Activated CD4-positive, alpha-beta memory T cell treated with anti-CD3 and anti-CD28 coated beads for 36 hours (primary cell): ENCODE measurements at regions of chr11 and their contacts with region 1.

Region 1: GRCh38 chr11:94897330-94897768 is 76.0 kb downstream of the CWC15 start:
- DNase-seq: peak; percentile 54
- H3K4me3 Mint-ChIP-seq: no peak overlapping the region
- H3K27ac Mint-ChIP-seq: no peak overlapping the region
- H3K4me1 Mint-ChIP-seq: no peaks in the 10 kb centered on the region
- H3K27me3 Mint-ChIP-seq: no peaks in the 10 kb centered on the region

Region 2: GRCh38 chr11:94519478-94520084 is 377.8 kb before region 1 on chr11:
- CTCF ChIA-PET with region 1: interaction called, 7 read pairs
- POLR2A ChIA-PET with region 1: no interaction called
- intact Hi-C with region 1: loop called (anchors 1 kb)
- DNase-seq: no peak
- H3K4me3 Mint-ChIP-seq: no peak overlapping the region
- H3K27ac Mint-ChIP-seq: no peak overlapping the region
- H3K4me1 Mint-ChIP-seq: no peaks in the 10 kb centered on the region
- H3K27me3 Mint-ChIP-seq: peaks cover 15% of the 10 kb centered on the region

Region 3: DNA sequence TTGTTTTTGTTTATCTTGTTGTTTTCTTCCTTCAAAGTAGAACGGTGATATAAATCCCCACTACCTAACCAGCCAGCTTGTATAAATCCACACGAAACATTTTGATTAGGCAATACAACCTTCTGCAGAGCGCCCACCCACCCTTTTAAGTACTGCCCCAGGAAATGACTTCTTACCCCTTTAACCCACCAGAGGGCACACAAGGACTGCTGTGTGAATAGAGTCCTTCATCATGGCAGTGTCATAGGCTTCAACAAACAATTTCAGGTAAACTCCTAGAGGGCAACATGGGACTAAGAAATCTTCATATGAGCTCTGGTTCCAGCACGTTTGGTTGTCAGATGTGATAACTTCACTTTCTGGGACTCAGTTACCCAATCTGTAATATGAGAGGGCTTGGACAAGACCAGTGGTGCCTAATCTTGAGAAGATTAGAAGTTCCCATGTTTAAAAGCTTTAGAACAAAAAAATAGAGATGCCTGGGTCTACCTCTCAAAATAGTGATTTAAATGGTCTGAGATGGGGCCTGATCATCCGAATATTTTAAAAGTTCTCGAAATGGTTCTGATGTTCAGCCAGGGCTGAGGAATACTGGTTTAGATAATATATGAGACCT is 274.1 kb before region 1 on chr11:
- CTCF ChIA-PET with region 1: interaction called, 17 read pairs
- POLR2A ChIA-PET with region 1: no interaction called
- intact Hi-C with region 1: loop called (anchors 1 kb)
- DNase-seq: peak; percentile 62
- H3K4me3 Mint-ChIP-seq: no peak overlapping the region
- H3K27ac Mint-ChIP-seq: no peak overlapping the region
- H3K4me1 Mint-ChIP-seq: no peaks in the 10 kb centered on the region
- H3K27me3 Mint-ChIP-seq: peaks cover 8% of the 10 kb centered on the region

Region 4: DNA sequence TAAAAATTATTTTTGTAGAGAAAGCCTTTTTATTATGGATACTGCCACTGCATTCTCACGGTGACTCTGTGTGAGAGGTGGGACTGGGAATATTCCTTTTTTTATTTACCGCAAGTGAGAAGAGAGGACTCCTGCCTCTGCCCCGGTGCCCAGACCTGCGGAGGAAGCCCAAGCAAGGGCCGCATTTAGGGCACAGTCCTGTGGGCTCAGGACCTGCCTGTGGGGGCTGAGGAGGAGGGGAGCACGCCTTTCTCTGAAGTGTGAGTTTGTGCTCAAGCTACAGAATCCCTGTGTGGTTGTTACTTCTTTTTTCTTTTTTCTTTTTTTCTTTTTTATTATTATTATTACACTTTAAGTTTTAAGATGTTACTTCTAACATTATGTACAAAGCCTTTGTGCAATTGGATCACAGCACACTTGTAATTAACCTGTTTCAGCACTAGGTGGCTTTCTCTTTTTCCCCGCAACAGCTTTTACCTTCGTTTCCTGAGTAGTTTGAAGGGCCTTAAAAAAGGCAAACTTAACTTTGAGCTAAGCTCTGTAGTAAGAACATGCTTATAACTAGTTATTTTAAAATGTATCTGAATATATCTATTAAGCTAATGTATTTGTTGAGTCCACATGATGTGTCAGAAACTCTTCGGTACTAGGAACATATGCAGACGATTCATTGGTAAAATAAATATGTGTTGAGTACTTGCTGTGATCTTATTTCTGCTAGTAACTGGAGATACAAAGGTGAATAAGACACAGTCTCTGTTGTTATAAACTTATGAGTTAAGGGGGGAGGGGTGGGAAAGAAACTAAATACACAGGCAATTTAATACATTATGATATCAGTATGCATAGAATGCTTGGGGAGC is 110.9 kb before region 1 on chr11:
- CTCF ChIA-PET with region 1: interaction called, 24 read pairs
- POLR2A ChIA-PET with region 1: no interaction called
- intact Hi-C with region 1: loop called (anchors 1 kb)
- DNase-seq: no peak
- H3K4me3 Mint-ChIP-seq: no peak overlapping the region
- H3K27ac Mint-ChIP-seq: no peak overlapping the region
- H3K4me1 Mint-ChIP-seq: no peaks in the 10 kb centered on the region
- H3K27me3 Mint-ChIP-seq: peaks cover 1% of the 10 kb centered on the region

Region 5: DNA sequence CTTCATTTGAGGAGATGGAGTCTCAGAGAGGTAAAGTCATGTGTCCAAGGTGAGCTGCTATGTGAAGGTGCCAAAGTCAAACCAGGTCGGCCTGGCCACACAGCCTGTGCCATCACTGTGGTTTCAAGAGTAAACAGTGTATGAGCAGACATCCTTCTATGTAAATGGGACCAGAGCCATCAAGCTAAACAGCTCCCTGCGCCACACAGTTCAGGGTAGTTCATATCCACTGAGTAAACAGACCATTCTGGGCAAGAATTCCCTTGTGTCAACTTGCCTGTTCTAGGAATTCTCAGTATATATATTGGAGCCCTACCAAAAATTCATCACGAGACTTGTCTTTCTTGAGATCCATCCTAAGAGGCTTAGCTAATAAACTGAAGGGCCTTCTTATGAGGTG is 51.7 kb before region 1 on chr11:
- CTCF ChIA-PET with region 1: no interaction called
- POLR2A ChIA-PET with region 1: no interaction called
- intact Hi-C with region 1: no loop called
- DNase-seq: no peak
- H3K4me3 Mint-ChIP-seq: no peak overlapping the region
- H3K27ac Mint-ChIP-seq: no peak overlapping the region
- H3K4me1 Mint-ChIP-seq: no peaks in the 10 kb centered on the region
- H3K27me3 Mint-ChIP-seq: peaks cover 3% of the 10 kb centered on the region

Region 6: DNA sequence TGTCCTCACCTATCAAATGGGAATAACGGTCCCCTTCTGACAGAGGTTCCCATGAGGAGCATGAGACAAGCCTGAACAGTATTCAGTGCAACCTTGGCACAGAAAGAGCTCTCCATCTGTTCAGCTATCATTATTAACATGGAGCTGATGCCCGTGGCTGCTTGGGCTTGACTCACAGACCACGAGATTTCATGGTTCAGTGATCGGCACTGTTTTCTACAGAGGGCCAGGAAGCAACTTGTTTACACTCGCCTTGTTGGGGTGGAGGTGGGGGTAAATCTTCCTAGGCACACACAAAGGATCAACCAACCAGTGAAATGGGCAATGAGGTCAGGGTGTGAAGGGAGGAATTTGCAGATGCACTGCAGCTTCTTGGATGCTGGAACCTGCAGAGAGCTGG is 12.2 kb before region 1 on chr11:
- CTCF ChIA-PET with region 1: interaction called, 14 read pairs
- POLR2A ChIA-PET with region 1: no interaction called
- intact Hi-C with region 1: no loop called
- DNase-seq: no peak
- H3K4me3 Mint-ChIP-seq: no peak overlapping the region
- H3K27ac Mint-ChIP-seq: no peak overlapping the region
- H3K4me1 Mint-ChIP-seq: no peaks in the 10 kb centered on the region
- H3K27me3 Mint-ChIP-seq: no peaks in the 10 kb centered on the region

Region 7: GRCh38 chr11:95364324-95365295 is 467.3 kb after region 1 on chr11:
- CTCF ChIA-PET with region 1: no interaction called
- POLR2A ChIA-PET with region 1: no interaction called
- intact Hi-C with region 1: no loop called
- DNase-seq: no peak
- H3K4me3 Mint-ChIP-seq: no peak overlapping the region
- H3K27ac Mint-ChIP-seq: no peak overlapping the region
- H3K4me1 Mint-ChIP-seq: no peaks in the 10 kb centered on the region
- H3K27me3 Mint-ChIP-seq: no peaks in the 10 kb centered on the region

Region 8: DNA sequence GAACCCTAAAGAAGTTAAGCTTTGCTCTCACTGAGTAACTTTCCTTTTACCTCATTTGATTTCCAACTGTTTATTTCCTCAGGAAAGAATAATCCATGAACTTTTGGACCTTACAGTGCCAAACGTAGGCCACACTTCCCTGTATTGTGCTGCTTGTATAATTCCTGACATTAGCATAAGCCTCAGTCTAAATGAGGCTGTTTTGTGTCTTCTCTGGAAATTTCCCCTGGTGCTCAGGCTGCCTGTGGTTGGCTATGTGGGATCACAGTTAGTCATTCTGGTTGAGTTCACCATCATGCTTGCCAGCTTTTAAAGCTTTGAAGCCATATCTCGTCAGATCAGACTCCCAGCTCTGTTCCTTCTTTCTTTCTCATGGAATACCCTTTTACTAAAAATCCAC is 785.2 kb after region 1 on chr11:
- CTCF ChIA-PET with region 1: no interaction called
- POLR2A ChIA-PET with region 1: no interaction called
- intact Hi-C with region 1: no loop called
- DNase-seq: peak; percentile 70
- H3K4me3 Mint-ChIP-seq: no peak overlapping the region
- H3K27ac Mint-ChIP-seq: peak overlapping the region; percentile 64
- H3K4me1 Mint-ChIP-seq: peaks cover 85% of the 10 kb centered on the region
- H3K27me3 Mint-ChIP-seq: no peaks in the 10 kb centered on the region